ENCODE measurements at regions of chr6 and their contacts with region 1.

Region 1: DNA sequence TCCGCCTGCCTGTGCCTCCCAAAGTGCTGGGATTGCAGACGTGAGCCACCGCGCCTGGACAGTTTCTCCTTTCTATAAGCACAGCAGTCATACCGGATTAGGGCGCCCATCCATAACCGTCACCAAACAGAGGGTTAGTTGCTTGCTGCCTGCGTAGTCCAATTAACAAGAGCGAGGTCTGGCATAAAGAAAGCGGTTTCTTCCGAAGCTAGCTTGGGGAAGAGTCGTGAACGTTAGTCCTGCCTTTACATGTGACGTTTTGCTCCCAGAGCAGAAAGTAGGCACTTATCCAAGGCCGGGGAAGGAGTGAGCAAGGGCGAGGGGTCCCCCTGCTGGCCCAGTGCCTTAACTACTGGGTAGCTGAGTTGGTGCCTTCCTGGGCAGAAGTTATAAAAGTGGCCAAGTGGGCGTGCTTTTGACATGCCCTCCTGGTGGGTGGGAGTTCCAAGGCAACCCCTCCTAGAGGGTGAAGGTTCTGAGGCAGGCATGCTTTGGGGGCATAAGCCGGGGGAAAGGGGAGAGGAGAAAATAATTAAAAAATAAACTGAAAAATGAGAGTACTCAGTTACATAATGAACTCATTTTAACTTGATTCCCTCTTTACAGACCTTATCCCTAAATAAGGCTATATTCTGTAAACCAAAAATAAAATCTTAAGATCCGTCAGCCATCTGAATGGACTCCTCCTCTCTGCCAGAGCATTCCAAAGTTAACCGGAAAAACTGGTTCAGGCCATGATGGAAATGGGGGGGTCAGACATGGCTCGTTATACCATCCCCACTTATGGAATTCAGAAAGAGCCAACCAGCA is 88.0 kb downstream of the FAM217A start:
- DNase-seq: peak; percentile 82
- H3K4me3 ChIP-seq: peak overlapping the region in 1 of 2 experiments; percentile 2; a peak in 1 of 4 replicates
- H3K27ac ChIP-seq: peak overlapping the region in 1 of 2 experiments; percentile 14; a peak in 1 of 4 replicates
- H3K4me1 ChIP-seq: peaks cover 14% of the 10 kb centered on the region in 2 experiments; a peak in 2 of 4 replicates
- H3K27me3 ChIP-seq: no peaks in the 10 kb centered on the region
- CTCF ChIP-seq: peak; percentile 96
- EP300 ChIP-seq: no peak
- RAD21 ChIP-seq: peak; percentile 91

Region 2: GRCh38 chr6:3977875-3978711 is 12.8 kb before region 1 on chr6:
- CTCF ChIA-PET with region 1: interaction called, 13 read pairs
- POLR2A ChIA-PET with region 1: no interaction called
- DNase-seq: no peak
- H3K4me3 ChIP-seq: no peak overlapping the region
- H3K27ac ChIP-seq: no peak overlapping the region
- H3K4me1 ChIP-seq: no peaks in the 10 kb centered on the region
- H3K27me3 ChIP-seq: no peaks in the 10 kb centered on the region
- CTCF ChIP-seq: peak; percentile 48
- EP300 ChIP-seq: no peak
- RAD21 ChIP-seq: peak; percentile 30; the same call in 1 of the 2 replicates

Region 3: GRCh38 chr6:4008324-4009047 is 17.6 kb after region 1 on chr6:
- CTCF ChIA-PET with region 1: interaction called, 17 read pairs
- POLR2A ChIA-PET with region 1: no interaction called
- DNase-seq: peak; percentile 49
- H3K4me3 ChIP-seq: no peak overlapping the region; a peak in 1 of 4 replicates
- H3K27ac ChIP-seq: peak overlapping the region in 1 of 2 experiments; percentile 9; a peak in 1 of 4 replicates
- H3K4me1 ChIP-seq: peaks cover 0 to 6% of the 10 kb centered on the region in 2 experiments; a peak in 2 of 4 replicates
- H3K27me3 ChIP-seq: no peaks in the 10 kb centered on the region
- CTCF ChIP-seq: peak; percentile 69
- EP300 ChIP-seq: no peak
- RAD21 ChIP-seq: peak; percentile 76

Region 4: GRCh38 chr6:4039348-4039747 is 48.5 kb after region 1 on chr6:
- CTCF ChIA-PET with region 1: no interaction called
- POLR2A ChIA-PET with region 1: no interaction called
- DNase-seq: no peak
- H3K4me3 ChIP-seq: no peak overlapping the region
- H3K27ac ChIP-seq: no peak overlapping the region
- H3K4me1 ChIP-seq: 0 out of 4 replicates have a peak, but pooled peaks cover 0 to 2% of the 10 kb centered on the region in 2 experiments
- H3K27me3 ChIP-seq: no peaks in the 10 kb centered on the region
- CTCF ChIP-seq: no peak
- EP300 ChIP-seq: no peak
- RAD21 ChIP-seq: no peak

Region 5: GRCh38 chr6:4853782-4854511 is 863.0 kb after region 1 on chr6:
- CTCF ChIA-PET with region 1: no interaction called
- POLR2A ChIA-PET with region 1: no interaction called
- DNase-seq: no peak
- H3K4me3 ChIP-seq: no peak overlapping the region
- H3K27ac ChIP-seq: no peak overlapping the region
- H3K4me1 ChIP-seq: peaks cover 0 to 1% of the 10 kb centered on the region in 2 experiments; a peak in 1 of 4 replicates
- H3K27me3 ChIP-seq: no peaks in the 10 kb centered on the region
- CTCF ChIP-seq: no peak
- EP300 ChIP-seq: no peak
- RAD21 ChIP-seq: no peak